ENCODE measurements at regions of chrX and their contacts with region 1.

Region 1: DNA sequence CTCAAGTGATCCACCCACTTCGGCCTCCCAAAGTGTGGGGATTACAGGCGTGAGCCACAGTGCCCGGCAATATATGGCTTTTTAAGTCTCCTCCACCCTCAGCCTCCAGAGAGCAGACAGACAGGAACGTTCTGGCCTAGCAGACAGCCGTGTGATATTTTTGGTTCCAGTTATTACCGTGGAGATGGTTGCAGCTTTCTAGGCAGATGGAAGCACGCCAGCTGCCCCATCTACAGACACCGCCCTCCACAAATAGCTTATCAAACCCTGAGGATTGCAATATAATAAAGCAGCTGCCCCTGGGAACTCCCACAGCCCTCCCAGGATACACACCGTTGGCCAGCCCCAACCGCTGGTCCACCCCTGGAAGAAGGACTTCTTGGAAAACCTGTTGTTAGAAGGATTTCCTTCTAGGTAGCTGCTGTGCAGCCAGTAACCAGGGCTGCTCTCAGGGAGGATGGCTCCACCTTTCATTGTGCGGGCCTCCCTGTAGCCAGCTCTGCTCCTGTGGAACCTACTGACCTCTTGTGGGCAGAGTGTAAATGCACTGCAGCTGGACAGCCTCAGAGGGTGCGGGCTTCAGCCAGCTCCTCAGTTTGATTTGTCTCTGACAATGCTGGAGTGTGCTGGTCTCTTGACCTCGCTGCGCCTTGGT is 44.0 kb downstream of the SLC25A5 start:
- DNase-seq: peak; percentile 73
- H3K4me3 ChIP-seq: no peak overlapping the region
- H3K27ac ChIP-seq: peak overlapping the region in 1 of 4 donors; percentile 38
- H3K4me1 ChIP-seq: no peaks in the 10 kb centered on the region
- H3K27me3 ChIP-seq: no peaks in the 10 kb centered on the region
- CTCF ChIP-seq: peak; percentile 9 to 59 (median 36)
- EP300 ChIP-seq: no peak
- POLR2A ChIP-seq: peak in 1 of 2 donors; percentile 6

Region 2: DNA sequence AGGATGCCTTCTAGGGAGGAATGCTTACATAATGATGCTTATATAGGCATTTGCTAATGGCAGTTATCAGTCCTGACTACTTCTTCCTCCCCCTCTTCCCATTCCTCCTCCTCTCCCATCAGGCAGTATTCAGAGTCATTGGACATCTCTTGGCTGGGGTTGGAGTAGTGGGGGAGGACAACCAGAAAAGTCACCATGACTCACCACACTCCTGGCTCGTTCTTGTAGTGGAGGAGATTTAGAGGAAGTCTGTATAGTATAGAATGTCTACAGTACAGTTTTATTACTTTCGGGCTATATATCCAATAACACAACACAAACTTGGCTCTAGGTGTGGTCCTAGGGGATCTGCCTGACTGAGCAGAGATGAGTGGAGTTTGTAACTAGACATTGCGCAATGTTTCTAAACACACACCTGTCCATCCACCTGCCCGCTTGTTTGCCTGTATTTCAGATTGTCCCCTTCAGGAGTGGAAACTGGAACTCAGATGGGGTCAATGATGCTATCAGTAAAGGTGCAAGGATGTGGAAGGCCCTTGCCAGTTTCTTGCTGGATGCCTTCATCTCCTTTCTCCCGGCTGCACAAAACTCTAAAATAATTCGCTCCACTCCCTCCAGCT is 356.7 kb before region 1 on chrX:
- intact Hi-C with region 1: no loop called
- DNase-seq: no peak
- H3K4me3 ChIP-seq: no peak overlapping the region
- H3K27ac ChIP-seq: no peak overlapping the region
- H3K4me1 ChIP-seq: no peaks in the 10 kb centered on the region
- H3K27me3 ChIP-seq: no peaks in the 10 kb centered on the region
- CTCF ChIP-seq: no peak
- EP300 ChIP-seq: no peak
- POLR2A ChIP-seq: no peak

Region 3: GRCh38 chrX:119468930-119469635 is 43.2 kb before region 1 on chrX:
- intact Hi-C with region 1: no loop called
- DNase-seq: peak; percentile 93
- H3K4me3 ChIP-seq: peak overlapping the region; percentile 73 to 80 (median 76)
- H3K27ac ChIP-seq: peak overlapping the region; percentile 96 to 99 (median 96)
- H3K4me1 ChIP-seq: peaks cover 0 to 12% (median 2%) of the 10 kb centered on the region in 4 donors
- H3K27me3 ChIP-seq: peaks cover 0 to 4% (median 0%) of the 10 kb centered on the region in 3 donors
- CTCF ChIP-seq: peak; percentile 26 to 63 (median 33)
- EP300 ChIP-seq: no peak
- POLR2A ChIP-seq: no peak

Region 4: DNA sequence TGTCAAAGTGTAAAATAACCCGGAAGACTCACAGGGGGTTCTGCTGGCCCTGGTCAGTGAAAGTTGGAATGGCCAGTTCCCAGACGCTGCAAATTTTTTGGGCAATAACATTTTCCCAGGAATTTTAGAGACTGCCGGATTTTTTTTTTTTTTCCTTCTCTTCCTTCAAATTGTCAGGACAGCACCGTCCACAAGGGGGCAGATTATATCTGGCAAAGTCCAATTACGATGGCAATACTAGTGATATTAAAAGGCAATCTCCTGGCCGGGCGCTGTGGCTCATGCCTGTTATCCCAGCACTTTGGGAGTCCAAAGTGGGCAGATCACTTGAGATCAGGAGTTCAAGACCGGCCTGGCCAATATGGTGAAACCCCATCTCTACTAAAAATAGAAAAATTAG is 23.5 kb before region 1 on chrX:
- intact Hi-C with region 1: loop called (anchors 2 kb)
- DNase-seq: peak; percentile 66
- H3K4me3 ChIP-seq: no peak overlapping the region
- H3K27ac ChIP-seq: no peak overlapping the region
- H3K4me1 ChIP-seq: no peaks in the 10 kb centered on the region
- H3K27me3 ChIP-seq: no peaks in the 10 kb centered on the region
- CTCF ChIP-seq: peak in 3 of 4 experiments; percentile 16 to 55 (median 34)
- EP300 ChIP-seq: no peak
- POLR2A ChIP-seq: no peak

Measured in sigmoid colon (tissue), 7 donors.